CD8-positive, alpha-beta T cell (primary cell): ENCODE measurements at regions of chr5 and their contacts with region 1.

Region 1: DNA sequence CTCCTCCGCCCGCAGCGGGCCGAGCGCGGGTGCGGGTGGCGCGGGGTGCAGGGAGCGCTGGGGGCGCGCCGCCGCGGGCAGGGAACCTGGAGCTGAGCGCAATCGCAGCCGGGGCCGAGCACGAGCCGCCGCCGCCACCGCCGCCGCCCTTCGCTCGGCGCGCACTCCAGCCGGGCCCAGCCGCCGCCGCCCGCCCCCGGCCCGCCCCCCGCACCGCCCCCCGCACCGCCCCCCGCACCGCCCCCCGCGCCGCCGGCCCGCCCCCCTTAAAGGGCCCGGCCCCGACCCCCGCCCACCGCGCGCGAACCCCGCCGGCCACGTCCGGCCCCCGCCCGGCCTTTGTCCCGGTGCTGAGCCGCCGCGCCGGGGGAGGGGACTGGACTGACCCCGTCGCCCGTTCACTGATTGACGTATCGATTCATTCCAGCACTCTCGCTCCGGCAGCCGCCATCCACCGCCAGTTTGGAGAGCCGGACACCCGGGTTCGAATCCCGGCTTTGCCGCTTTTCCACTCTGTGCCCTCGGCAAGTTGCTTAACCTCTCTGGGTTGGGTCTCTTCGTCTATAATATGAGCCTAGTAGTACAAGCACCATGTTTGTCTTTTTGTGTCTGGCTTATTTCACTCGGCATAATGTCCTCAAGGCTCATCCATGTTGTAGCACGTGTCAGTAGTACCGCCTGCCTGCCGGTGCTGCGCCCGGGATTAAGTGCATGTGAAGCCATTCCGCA is at the start of gene SH3PXD2B:
- DNase-seq: peak in 8 of 9 experiments; percentile 15 to 72 (median 38)
- ATAC-seq: peak; percentile 82
- H3K4me3 ChIP-seq: peak within 1 kb of the TSS; percentile 39 to 57
- H3K4me3 Mint-ChIP-seq: peak within 1 kb of the TSS; percentile 84
- H3K27ac ChIP-seq: no peak within 1 kb of the TSS
- H3K27ac Mint-ChIP-seq: no peak within 1 kb of the TSS
- H3K4me1 ChIP-seq: peaks cover 4% of the 10 kb centered on the region
- H3K4me1 Mint-ChIP-seq: peaks cover 12% of the 10 kb centered on the region
- H3K27me3 ChIP-seq: peaks cover 0 to 7% of the 10 kb centered on the region in 2 experiments
- H3K27me3 Mint-ChIP-seq: peaks cover 25% of the 10 kb centered on the region
- CTCF ChIP-seq: no peak
- total RNA-seq, gene SH3PXD2B: 0.03 to 0.08 TPM

Region 2: DNA sequence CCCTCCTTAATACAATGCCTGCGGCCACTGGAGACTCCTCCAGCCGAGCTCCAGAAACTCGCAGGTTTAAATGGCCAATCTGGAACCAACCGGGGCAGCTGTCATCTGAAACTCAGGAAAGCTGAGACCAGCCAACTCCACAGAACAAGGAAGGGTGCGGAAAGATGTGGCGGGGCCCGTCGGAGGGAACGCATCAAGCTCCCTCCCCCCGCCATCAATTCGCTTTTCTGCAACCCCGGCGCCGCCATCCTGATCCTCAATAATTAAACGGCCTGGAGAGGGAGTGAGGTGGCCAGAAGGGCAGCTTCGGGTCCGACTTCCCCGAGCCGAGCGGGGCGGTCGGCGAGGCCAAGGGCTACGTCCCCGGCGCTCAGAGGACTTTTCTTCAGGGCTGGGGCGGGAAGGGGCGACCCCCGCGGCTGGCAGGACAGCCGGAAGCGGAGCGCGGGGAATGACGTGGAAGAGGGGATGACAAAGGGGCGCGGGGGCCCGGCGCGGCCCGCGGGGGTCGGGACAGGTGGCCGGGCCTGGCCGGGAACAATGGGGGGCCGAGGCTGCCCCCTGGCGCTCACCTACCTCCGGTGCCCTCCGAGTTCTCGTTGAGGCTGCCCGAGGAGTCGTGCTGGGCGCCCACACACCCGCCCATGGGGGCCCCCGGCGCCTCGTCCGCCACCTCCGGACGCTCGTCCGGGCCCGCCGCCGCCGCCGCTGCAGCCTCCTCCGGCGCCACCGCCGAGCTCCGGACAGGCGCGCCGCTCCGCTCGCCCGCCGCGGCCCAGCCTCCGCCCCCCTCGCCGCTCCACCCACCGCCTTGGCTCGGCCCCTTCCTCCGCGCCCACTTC is 171.3 kb before region 1 on chr5 and contains the start of gene UBTD2:
- CTCF ChIA-PET with region 1: interaction called, 4 read pairs
- POLR2A ChIA-PET with region 1: no interaction called
- intact Hi-C with region 1: loop called in 1 of 2 experiments (anchors 10 kb)
- DNase-seq: peak; percentile 44 to 85 (median 70)
- ATAC-seq: peak; percentile 76
- H3K4me3 ChIP-seq: peak within 1 kb of the TSS; percentile 76 to 78
- H3K4me3 Mint-ChIP-seq: peak within 1 kb of the TSS; percentile 88
- H3K27ac ChIP-seq: no peak within 1 kb of the TSS
- H3K27ac Mint-ChIP-seq: peak within 1 kb of the TSS; percentile 77
- H3K4me1 ChIP-seq: peaks cover 18% of the 10 kb centered on the region
- H3K4me1 Mint-ChIP-seq: peaks cover 26% of the 10 kb centered on the region
- H3K27me3 ChIP-seq: no peaks in the 10 kb centered on the region
- H3K27me3 Mint-ChIP-seq: no peaks in the 10 kb centered on the region
- CTCF ChIP-seq: peak; percentile 61
- total RNA-seq, gene UBTD2: 0.78 to 0.79 TPM

Region 3: GRCh38 chr5:172303572-172304335 is 150.8 kb before region 1 on chr5:
- CTCF ChIA-PET with region 1: no interaction called
- POLR2A ChIA-PET with region 1: no interaction called
- intact Hi-C with region 1: no loop called
- DNase-seq: no peak
- ATAC-seq: no peak
- H3K4me3 ChIP-seq: no peak overlapping the region
- H3K4me3 Mint-ChIP-seq: no peak overlapping the region
- H3K27ac ChIP-seq: no peak overlapping the region
- H3K27ac Mint-ChIP-seq: no peak overlapping the region
- H3K4me1 ChIP-seq: no peaks in the 10 kb centered on the region
- H3K4me1 Mint-ChIP-seq: no peaks in the 10 kb centered on the region
- H3K27me3 ChIP-seq: no peaks in the 10 kb centered on the region
- H3K27me3 Mint-ChIP-seq: peaks cover 4% of the 10 kb centered on the region
- CTCF ChIP-seq: no peak

Region 4: GRCh38 chr5:172426086-172426485 is 28.4 kb before region 1 on chr5:
- CTCF ChIA-PET with region 1: interaction called, 10 read pairs
- POLR2A ChIA-PET with region 1: no interaction called
- intact Hi-C with region 1: no loop called
- DNase-seq: no peak
- ATAC-seq: no peak
- H3K4me3 ChIP-seq: no peak overlapping the region
- H3K4me3 Mint-ChIP-seq: no peak overlapping the region
- H3K27ac ChIP-seq: no peak overlapping the region
- H3K27ac Mint-ChIP-seq: no peak overlapping the region
- H3K4me1 ChIP-seq: no peaks in the 10 kb centered on the region
- H3K4me1 Mint-ChIP-seq: no peaks in the 10 kb centered on the region
- H3K27me3 ChIP-seq: no peaks in the 10 kb centered on the region
- H3K27me3 Mint-ChIP-seq: peaks cover 6% of the 10 kb centered on the region
- CTCF ChIP-seq: no peak

Region 5: DNA sequence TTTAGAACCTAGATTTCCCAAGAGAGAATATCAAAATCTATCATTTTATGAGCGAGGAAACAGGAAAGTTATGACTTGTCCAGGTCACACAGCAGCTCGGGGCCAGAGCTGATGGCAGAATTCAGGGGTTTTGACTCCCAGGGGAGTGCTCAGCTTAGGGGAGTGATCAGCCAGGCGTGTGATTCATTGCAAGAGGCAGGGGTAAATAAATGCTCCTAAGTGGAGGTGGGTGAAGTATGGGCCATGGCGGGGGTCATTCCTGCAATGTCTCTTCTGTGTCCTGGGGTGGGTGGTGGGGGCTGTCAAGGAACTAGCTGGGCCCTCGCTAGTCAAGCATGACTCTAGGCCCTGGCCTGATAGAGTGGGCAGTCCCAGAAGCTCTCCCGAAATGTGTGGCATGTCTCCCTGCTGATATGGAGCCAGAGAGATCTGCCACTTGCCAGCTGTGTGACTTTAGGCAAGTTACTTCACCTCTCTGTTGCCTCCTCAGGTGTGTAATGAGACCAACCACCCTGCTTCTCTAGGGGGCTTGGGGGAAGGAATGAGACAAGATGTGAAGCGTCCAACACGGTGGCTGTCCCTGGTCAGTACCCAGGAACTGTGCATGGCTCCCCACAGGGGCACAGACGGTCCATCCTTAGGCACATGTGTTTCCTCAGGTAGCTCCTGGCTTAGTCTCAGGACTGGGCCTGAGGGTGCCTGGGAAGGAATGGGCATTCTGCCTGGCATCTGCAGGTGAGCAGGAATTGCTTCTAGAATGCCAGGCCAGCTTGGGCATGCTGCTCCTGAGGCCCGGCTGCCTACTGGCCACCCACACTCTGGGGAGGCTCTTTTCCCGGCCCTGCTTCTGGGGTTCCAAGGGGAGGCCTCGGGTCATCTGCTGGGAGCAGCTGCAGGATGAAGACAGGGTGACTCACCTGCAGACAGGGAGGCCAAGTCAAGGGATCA is 36.3 kb after region 1 on chr5:
- CTCF ChIA-PET with region 1: no interaction called
- POLR2A ChIA-PET with region 1: no interaction called
- intact Hi-C with region 1: no loop called
- DNase-seq: no peak
- ATAC-seq: no peak
- H3K4me3 ChIP-seq: no peak overlapping the region
- H3K4me3 Mint-ChIP-seq: no peak overlapping the region
- H3K27ac ChIP-seq: no peak overlapping the region
- H3K27ac Mint-ChIP-seq: no peak overlapping the region
- H3K4me1 ChIP-seq: no peaks in the 10 kb centered on the region
- H3K4me1 Mint-ChIP-seq: no peaks in the 10 kb centered on the region
- H3K27me3 ChIP-seq: no peaks in the 10 kb centered on the region
- H3K27me3 Mint-ChIP-seq: peaks cover 13% of the 10 kb centered on the region
- CTCF ChIP-seq: no peak